ENCODE measurements at regions of chr2 and their contacts with region 1.

Region 1: DNA sequence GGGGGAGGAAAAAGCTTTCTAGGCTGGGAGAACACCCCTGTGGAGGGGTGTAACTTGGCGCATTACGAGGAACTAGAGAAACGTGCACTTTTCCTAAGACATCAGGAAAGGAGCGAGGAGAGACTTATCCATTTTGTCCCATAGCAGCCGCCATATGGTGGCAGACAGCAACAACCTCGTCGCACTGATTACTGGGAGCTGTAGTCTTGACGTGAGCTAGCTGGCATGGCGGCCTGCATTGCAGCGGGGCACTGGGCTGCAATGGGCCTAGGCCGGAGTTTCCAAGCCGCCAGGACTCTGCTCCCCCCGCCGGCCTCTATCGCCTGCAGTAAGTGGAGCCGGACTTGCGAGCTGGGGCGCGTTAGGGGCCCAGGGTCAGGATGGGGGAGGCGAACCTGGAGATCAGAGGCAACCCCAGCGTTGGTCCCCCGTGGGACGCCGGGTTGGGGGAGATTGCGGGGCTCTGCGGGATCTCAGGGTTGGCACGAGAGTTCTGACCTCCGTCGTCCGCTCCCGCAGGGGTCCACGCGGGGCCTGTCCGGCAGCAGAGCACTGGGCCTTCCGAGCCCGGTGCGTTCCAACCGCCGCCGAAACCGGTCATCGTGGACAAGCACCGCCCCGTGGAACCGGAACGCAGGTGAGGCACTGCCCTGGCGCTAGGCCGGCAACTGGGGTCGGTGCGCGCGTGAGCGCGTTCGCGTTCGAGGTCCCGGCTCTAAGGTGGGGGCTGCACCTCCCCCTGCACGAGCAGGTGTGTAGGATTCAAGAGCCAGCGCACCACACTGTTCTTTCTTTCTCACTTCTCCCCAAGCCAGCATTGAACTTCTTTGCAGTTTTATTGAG is at the start of gene MRPL19:
- DNase-seq: peak; percentile 73 to 77 (median 76)
- H3K4me3 ChIP-seq: peak within 1 kb of the TSS; percentile 74 to 85
- H3K4me3 Mint-ChIP-seq: peak within 1 kb of the TSS; percentile 89 to 96 (median 95)
- H3K27ac ChIP-seq: peak within 1 kb of the TSS; percentile 69
- H3K27ac Mint-ChIP-seq: peak within 1 kb of the TSS; percentile 85 to 95 (median 94)
- H3K4me1 ChIP-seq: peaks cover 23% of the 10 kb centered on the region
- H3K4me1 Mint-ChIP-seq: peaks cover 14 to 49% (median 30%) of the 10 kb centered on the region in 4 donors
- H3K27me3 ChIP-seq: no peaks in the 10 kb centered on the region
- H3K27me3 Mint-ChIP-seq: no peaks in the 10 kb centered on the region
- total RNA-seq, gene MRPL19: 27.6 to 29.4 TPM

Region 2: DNA sequence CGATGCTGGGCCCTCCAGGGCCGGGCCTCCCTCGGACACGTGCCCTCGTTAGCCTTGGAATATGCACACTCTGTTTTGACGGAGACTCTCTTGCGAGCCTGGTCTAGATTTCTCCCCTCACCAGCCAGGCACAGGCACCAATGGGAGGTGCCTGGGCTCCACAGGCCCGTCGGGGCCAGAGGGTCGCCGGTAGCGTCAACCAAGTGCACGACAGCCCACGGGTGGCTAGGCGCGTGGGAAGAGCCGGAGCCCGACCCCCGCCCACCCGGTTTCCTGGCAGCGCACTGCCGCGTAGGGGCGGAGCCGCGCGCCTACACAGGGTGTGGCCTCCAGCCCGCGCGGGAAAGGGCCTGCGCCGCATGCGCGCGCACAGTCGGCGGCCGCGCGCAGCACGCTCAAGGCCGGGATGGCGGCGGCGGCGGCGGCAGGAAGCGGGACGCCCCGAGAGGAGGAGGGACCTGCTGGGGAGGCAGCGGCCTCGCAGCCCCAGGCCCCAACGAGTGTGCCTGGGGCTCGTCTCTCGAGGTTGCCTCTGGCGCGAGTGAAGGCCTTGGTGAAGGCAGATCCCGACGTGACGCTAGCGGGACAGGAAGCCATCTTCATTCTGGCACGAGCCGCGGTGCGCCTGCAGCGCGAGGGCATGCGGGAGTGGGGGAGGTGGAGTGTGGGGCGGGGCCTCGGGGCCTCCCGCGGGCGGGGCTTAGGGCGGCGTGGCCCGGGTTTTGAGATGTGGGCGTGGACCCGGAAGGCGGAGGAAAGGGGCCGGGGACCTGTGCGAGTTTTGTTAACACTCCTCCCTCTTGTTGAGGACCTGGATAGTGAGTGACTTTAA is 688.3 kb before region 1 on chr2 and contains the start of gene POLE4:
- CTCF ChIA-PET with region 1: no interaction called
- POLR2A ChIA-PET with region 1: no interaction called
- intact Hi-C with region 1: loop called (anchors 2 kb)
- DNase-seq: peak; percentile 93 to 94 (median 94)
- H3K4me3 ChIP-seq: peak within 1 kb of the TSS; percentile 72 to 79
- H3K4me3 Mint-ChIP-seq: peak within 1 kb of the TSS; percentile 83 to 91 (median 86)
- H3K27ac ChIP-seq: peak within 1 kb of the TSS; percentile 74
- H3K27ac Mint-ChIP-seq: peak within 1 kb of the TSS; percentile 85 to 95 (median 92)
- H3K4me1 ChIP-seq: peaks cover 33% of the 10 kb centered on the region
- H3K4me1 Mint-ChIP-seq: peaks cover 33 to 62% (median 49%) of the 10 kb centered on the region in 4 donors
- H3K27me3 ChIP-seq: no peaks in the 10 kb centered on the region
- H3K27me3 Mint-ChIP-seq: no peaks in the 10 kb centered on the region
- total RNA-seq, gene POLE4: 46.1 to 49.0 TPM

Region 3: GRCh38 chr2:75204833-75205232 is 442.0 kb before region 1 on chr2:
- CTCF ChIA-PET with region 1: no interaction called
- POLR2A ChIA-PET with region 1: no interaction called
- intact Hi-C with region 1: no loop called
- DNase-seq: no peak
- H3K4me3 ChIP-seq: no peak overlapping the region
- H3K4me3 Mint-ChIP-seq: no peak overlapping the region
- H3K27ac ChIP-seq: no peak overlapping the region
- H3K27ac Mint-ChIP-seq: no peak overlapping the region
- H3K4me1 ChIP-seq: peaks cover 3% of the 10 kb centered on the region
- H3K4me1 Mint-ChIP-seq: peaks cover 0 to 12% (median 6%) of the 10 kb centered on the region in 4 donors
- H3K27me3 ChIP-seq: peaks cover 12% of the 10 kb centered on the region
- H3K27me3 Mint-ChIP-seq: peaks cover 33 to 36% of the 10 kb centered on the region in 2 donors

Region 4: DNA sequence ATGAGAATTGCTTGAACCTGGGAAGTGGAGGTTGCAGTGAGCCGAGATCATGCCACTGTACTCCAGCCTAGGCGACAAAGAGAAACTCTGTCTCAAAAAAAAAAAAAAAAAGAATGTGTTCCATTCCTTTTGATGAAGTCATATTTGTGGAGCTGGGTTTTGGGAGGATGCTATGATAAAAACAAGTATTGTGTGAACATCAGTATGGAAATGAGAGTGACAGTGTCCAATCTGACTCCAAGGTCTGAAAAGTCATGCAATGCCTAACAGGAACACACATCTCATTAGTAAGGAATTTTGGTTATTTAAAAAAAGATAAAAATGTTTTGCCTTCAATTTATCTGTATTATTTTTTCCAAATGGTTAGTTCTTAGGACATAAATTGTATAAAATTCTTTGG is 52.1 kb after region 1 on chr2:
- CTCF ChIA-PET with region 1: no interaction called
- POLR2A ChIA-PET with region 1: no interaction called
- intact Hi-C with region 1: loop called (anchors 5 kb)
- DNase-seq: no peak
- H3K4me3 ChIP-seq: no peak overlapping the region
- H3K4me3 Mint-ChIP-seq: no peak overlapping the region
- H3K27ac ChIP-seq: no peak overlapping the region
- H3K27ac Mint-ChIP-seq: no peak overlapping the region
- H3K4me1 ChIP-seq: no peaks in the 10 kb centered on the region
- H3K4me1 Mint-ChIP-seq: peaks cover 0 to 4% (median 0%) of the 10 kb centered on the region in 4 donors
- H3K27me3 ChIP-seq: no peaks in the 10 kb centered on the region
- H3K27me3 Mint-ChIP-seq: no peaks in the 10 kb centered on the region

Region 5: GRCh38 chr2:75710577-75711253 is 63.9 kb after region 1 on chr2 and contains the start of gene GCFC2:
- CTCF ChIA-PET with region 1: no interaction called
- POLR2A ChIA-PET with region 1: interaction called, 29 read pairs
- intact Hi-C with region 1: loop called (anchors 2 kb)
- DNase-seq: peak; percentile 76 to 85 (median 82)
- H3K4me3 ChIP-seq: peak within 1 kb of the TSS; percentile 32 to 65
- H3K4me3 Mint-ChIP-seq: peak within 1 kb of the TSS; percentile 89 to 96 (median 94)
- H3K27ac ChIP-seq: peak within 1 kb of the TSS; percentile 70
- H3K27ac Mint-ChIP-seq: peak within 1 kb of the TSS; percentile 86 to 98 (median 96)
- H3K4me1 ChIP-seq: peaks cover 32% of the 10 kb centered on the region
- H3K4me1 Mint-ChIP-seq: peaks cover 23 to 33% (median 28%) of the 10 kb centered on the region in 4 donors
- H3K27me3 ChIP-seq: no peaks in the 10 kb centered on the region
- H3K27me3 Mint-ChIP-seq: peaks cover 1% of the 10 kb centered on the region in 2 donors
- total RNA-seq, gene GCFC2: 22.9 to 25.9 TPM